HepG2 (cell line): ENCODE measurements at regions of chr12 and their contacts with region 1.

Region 1: GRCh38 chr12:43835656-43836474 is at the start of gene TMEM117:
- DNase-seq: peak; percentile 25
- ATAC-seq: peak; percentile 86
- H3K4me3 ChIP-seq: peak within 1 kb of the TSS; percentile 75 to 86 (median 76)
- H3K27ac ChIP-seq: peak within 1 kb of the TSS; percentile 83
- H3K4me1 ChIP-seq: peaks cover 44% of the 10 kb centered on the region
- H3K27me3 ChIP-seq: no peaks in the 10 kb centered on the region
- CTCF ChIP-seq: no peak
- EP300 ChIP-seq: no peak
- POLR2A ChIP-seq: peak; percentile 42 to 54
- RAD21 ChIP-seq: peak; percentile 32
- total RNA-seq, gene TMEM117: 6.5 and 8.5 TPM in 2 replicates

Region 2: GRCh38 chr12:43758728-43759563 is 76.9 kb before region 1 on chr12 and contains the starts of genes IRAK4 and PUS7L:
- CTCF ChIA-PET with region 1: no interaction called
- POLR2A ChIA-PET with region 1: no interaction called
- in situ Hi-C with region 1: no loop called
- intact Hi-C with region 1: loop called (anchors 2 kb)
- DNase-seq: peak; percentile 97
- ATAC-seq: peak; percentile 93
- H3K4me3 ChIP-seq: peak within 1 kb of the TSS; percentile 70 to 93 (median 84)
- H3K27ac ChIP-seq: peak within 1 kb of the TSS; percentile 87
- H3K4me1 ChIP-seq: peaks cover 62% of the 10 kb centered on the region
- H3K27me3 ChIP-seq: no peaks in the 10 kb centered on the region; a peak in 1 of 5 replicates
- CTCF ChIP-seq: peak; percentile 78
- EP300 ChIP-seq: no peak
- POLR2A ChIP-seq: peak; percentile 80 to 83
- RAD21 ChIP-seq: no peak
- total RNA-seq, gene IRAK4: 7.1 and 8.4 TPM in 2 replicates
- total RNA-seq, gene PUS7L: 37.6 and 92.7 TPM in 2 replicates

Region 3: GRCh38 chr12:43776498-43776897 is 59.4 kb before region 1 on chr12:
- CTCF ChIA-PET with region 1: no interaction called
- POLR2A ChIA-PET with region 1: no interaction called
- in situ Hi-C with region 1: no loop called
- intact Hi-C with region 1: loop called (anchors 2 kb)
- DNase-seq: peak; percentile 44
- ATAC-seq: peak; percentile 89
- H3K4me3 ChIP-seq: no peak overlapping the region
- H3K27ac ChIP-seq: no peak overlapping the region
- H3K4me1 ChIP-seq: no peaks in the 10 kb centered on the region
- H3K27me3 ChIP-seq: no peaks in the 10 kb centered on the region
- CTCF ChIP-seq: peak; percentile 61
- EP300 ChIP-seq: no peak
- POLR2A ChIP-seq: no peak
- RAD21 ChIP-seq: no peak

Region 4: DNA sequence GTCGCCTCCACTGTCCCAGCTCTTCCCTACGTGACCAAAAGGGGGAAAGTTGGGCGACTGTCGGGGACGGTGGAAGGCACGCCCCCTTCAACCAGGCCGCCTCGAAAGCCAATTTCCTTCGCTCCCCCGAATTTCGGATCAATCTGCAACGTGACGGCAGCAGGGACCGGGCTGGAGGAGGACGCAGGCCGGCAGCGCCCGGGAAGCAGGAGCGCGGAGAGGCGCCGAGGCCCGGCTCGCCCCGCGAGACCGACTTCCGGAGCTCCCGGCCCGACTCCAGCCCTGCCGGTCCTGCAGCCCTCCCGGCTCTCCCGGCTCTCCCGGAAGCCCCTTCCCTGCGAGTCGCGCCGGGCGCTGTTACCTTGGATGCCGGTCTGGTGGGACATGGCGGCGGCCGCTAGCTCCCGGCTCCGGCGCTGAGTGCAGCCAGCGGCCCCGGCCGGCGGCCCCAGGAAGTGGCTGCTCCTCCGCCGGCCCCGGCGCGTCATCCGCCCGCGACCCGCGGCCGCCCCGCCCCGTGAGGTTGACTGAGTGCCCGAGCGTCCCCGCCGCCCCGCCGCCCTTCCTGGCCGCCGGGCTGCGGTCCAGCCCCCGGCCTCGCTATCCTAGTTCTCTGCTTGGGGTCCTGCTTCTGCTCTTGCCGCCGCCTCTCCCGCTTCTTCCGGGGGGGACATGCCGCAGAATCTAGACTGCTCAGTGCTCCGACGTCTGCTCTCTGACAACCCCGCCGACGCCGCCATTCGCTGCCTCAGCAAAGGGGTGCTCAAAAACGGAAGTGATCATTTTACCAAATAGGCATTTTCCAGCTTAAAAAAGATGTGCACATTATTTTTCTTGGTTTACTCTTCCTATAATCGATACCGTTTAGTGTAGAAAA is 29.8 kb before region 1 on chr12 and contains the start of gene TWF1:
- CTCF ChIA-PET with region 1: no interaction called
- POLR2A ChIA-PET with region 1: interaction called, 17 read pairs
- in situ Hi-C with region 1: no loop called
- intact Hi-C with region 1: loop called (anchors 1 kb)
- DNase-seq: peak; percentile 62
- ATAC-seq: peak; percentile 97
- H3K4me3 ChIP-seq: peak within 1 kb of the TSS; percentile 97 to 100 (median 98)
- H3K27ac ChIP-seq: peak within 1 kb of the TSS; percentile 96
- H3K4me1 ChIP-seq: peaks cover 26% of the 10 kb centered on the region
- H3K27me3 ChIP-seq: no peaks in the 10 kb centered on the region
- CTCF ChIP-seq: no peak; the same call in 1 of the 2 replicates
- EP300 ChIP-seq: no peak
- POLR2A ChIP-seq: peak; percentile 67 to 81
- RAD21 ChIP-seq: peak; percentile 62
- total RNA-seq, gene TWF1: 85.5 and 148 TPM in 2 replicates